Activated CD4-positive, alpha-beta T cell treated with anti-CD3 and anti-CD28 coated beads, Interleukin-2, amount 10 ng/mL, durations not matched to agents 24 days and 14 days (primary cell): ENCODE measurements at regions of chr1 and their contacts with region 1.

Region 1: GRCh38 chr1:110780600-110781484 is 92.1 kb upstream of the CD53 start:
- DNase-seq: peak; percentile 93
- H3K4me3 Mint-ChIP-seq: peak overlapping the region; percentile 14
- H3K27ac Mint-ChIP-seq: no peak overlapping the region
- H3K4me1 Mint-ChIP-seq: peaks cover 22% of the 10 kb centered on the region
- H3K27me3 Mint-ChIP-seq: peaks cover 16% of the 10 kb centered on the region

Region 2: GRCh38 chr1:110524311-110525251 is 256.3 kb before region 1 on chr1:
- intact Hi-C with region 1: loop called (anchors 1 kb)
- DNase-seq: peak; percentile 85
- H3K4me3 Mint-ChIP-seq: no peak overlapping the region
- H3K27ac Mint-ChIP-seq: no peak overlapping the region
- H3K4me1 Mint-ChIP-seq: peaks cover 4% of the 10 kb centered on the region
- H3K27me3 Mint-ChIP-seq: peaks cover 27% of the 10 kb centered on the region

Region 3: DNA sequence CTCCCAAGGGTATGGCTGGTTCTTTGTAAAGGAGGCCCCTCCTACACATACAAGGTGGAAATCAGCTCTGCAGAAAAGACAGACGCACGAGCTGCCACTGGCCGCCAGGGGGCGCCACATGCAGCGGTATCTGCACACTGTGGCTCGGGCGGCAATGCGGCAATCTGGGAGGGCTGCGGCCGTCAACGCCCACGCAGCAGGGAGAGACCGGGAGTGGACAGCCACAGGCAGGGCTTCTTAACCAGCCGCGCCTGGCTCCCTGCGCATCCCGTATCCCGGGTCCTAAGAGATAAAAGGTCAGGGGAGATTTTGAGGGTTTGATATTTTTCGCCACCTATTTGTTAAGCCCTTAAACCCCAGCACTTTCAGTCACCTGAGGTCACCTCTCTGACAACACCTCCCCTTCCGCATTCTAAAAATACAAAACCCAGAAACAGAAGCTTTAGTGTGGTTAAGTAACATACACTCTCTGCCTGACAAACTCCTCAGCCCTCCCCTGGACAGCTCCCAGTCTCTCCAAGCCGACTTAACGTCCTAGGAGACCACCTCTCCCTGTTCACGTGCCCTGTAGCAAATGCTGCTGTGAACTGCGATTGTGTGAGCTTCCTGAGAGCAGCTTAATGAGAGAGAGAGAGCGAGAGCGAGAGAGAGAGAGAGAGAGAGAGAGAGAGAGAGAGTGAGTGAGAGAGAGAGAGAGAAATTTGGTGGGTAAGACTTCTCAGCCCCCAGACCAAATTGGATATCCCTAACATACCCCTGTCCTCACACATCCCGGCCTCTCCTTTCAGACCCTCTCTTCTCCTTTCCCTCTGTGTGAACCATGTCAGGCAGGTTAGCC is 161.2 kb before region 1 on chr1:
- intact Hi-C with region 1: loop called (anchors 1 kb)
- DNase-seq: peak; percentile 97
- H3K4me3 Mint-ChIP-seq: peak overlapping the region; percentile 86
- H3K27ac Mint-ChIP-seq: peak overlapping the region; percentile 79
- H3K4me1 Mint-ChIP-seq: peaks cover 46% of the 10 kb centered on the region
- H3K27me3 Mint-ChIP-seq: peaks cover 4% of the 10 kb centered on the region

Region 4: DNA sequence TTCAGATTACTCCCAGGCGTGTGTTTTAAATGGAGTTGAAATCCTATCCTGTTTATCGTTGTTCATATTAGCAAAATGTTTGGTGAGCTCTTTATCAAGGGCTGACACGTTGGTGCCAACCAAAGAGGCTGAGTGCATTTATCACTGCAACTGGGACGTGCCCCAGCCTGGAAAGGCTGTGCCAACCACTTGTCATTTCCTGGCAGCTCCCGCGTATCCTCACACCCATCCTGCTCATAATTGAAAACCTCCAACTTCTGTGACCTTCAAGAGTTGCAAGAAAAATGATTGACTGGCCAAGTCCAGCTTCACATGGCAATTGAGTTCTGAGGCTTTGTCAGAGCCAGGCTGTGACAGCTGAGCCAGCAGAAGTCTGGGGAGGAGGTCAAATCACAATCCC is 62.4 kb before region 1 on chr1:
- intact Hi-C with region 1: no loop called
- DNase-seq: no peak
- H3K4me3 Mint-ChIP-seq: no peak overlapping the region
- H3K27ac Mint-ChIP-seq: no peak overlapping the region
- H3K4me1 Mint-ChIP-seq: peaks cover 6% of the 10 kb centered on the region
- H3K27me3 Mint-ChIP-seq: peaks cover 4% of the 10 kb centered on the region

Region 5: DNA sequence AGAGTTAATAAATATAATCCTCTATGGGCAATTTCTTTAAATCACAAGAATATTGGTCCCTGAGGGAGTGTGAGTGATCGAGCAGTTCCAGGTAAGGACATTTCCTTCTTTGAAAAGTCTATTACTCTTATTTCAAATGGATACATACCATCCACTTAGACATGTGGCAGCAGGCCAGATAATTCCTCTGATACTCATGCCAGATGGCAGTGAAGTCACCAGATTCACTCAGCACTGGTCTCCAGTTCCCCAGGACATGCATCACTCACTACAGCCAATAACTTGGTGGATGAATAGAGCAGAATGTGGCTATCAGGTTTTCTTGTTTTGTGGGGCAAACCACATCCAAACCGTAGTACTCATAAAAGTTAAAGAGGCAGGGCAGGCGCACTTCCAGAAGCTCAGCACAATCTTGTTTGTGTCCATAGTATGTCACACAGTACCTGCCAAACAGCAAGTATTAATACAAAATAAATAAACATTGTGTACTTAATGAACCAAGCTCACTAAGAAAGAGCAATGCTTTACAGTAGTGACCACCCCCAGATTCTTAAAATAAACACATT is 17.9 kb after region 1 on chr1:
- intact Hi-C with region 1: loop called (anchors 2 kb)
- DNase-seq: no peak
- H3K4me3 Mint-ChIP-seq: no peak overlapping the region
- H3K27ac Mint-ChIP-seq: no peak overlapping the region
- H3K4me1 Mint-ChIP-seq: no peaks in the 10 kb centered on the region
- H3K27me3 Mint-ChIP-seq: peaks cover 39% of the 10 kb centered on the region